ENCODE measurements at regions of chr7 and their contacts with region 1.

Region 1: DNA sequence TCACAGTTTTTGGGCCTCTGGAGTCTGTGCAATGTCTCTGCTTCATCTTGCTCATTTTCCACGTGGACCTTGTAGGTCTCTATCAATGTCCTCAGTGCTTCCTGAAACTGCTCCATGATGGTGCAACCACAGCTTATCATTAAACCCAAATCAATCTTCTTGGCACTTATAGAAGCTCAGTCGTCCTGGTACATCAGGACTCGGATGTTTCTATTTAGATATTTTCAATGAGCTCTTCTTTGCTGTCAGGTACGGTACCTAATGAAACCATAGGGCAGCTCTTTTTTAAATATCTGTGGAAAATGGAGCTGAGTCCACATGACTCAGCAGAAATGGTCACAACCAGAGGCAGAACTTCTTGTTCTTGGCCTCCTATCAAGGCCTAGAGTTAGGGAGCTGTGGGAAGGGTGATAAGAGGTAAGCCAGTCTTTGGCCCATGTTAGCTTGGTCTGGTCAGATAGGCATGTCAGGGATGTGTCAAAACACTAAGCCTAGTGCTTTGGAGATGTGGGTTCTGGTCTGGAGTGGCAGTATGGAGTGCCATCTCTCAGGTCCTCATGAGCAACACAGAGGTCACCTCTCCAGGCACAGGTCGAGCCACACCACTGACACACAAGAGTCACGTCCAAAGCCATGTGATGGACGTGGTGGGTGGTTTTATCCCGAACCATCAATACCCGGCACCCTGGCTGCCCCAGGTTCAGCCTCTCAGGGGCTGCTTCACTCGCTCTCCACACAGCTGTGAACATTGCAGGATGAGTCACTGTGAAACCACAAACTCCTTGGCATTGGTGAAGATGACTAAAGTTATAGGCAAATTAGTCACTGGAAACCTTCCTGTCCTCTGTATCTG is 87.0 kb downstream of the TBXAS1 start:
- DNase-seq: peak; percentile 98
- H3K4me3 Mint-ChIP-seq: peak overlapping the region; percentile 58
- H3K27ac Mint-ChIP-seq: peak overlapping the region; percentile 94
- H3K4me1 Mint-ChIP-seq: peaks cover 42% of the 10 kb centered on the region
- H3K27me3 Mint-ChIP-seq: no peaks in the 10 kb centered on the region
- CTCF ChIP-seq: no peak

Region 2: GRCh38 chr7:139901056-139901795 is 14.9 kb before region 1 on chr7:
- CTCF ChIA-PET with region 1: no interaction called
- POLR2A ChIA-PET with region 1: interaction called, 10 read pairs
- intact Hi-C with region 1: no loop called
- DNase-seq: no peak
- H3K4me3 Mint-ChIP-seq: no peak overlapping the region
- H3K27ac Mint-ChIP-seq: no peak overlapping the region
- H3K4me1 Mint-ChIP-seq: no peaks in the 10 kb centered on the region
- H3K27me3 Mint-ChIP-seq: no peaks in the 10 kb centered on the region
- CTCF ChIP-seq: no peak

Measured in MCF 10A (cell line).